Posterior vena cava (tissue), 2 donors: ENCODE measurements at regions of chr14 and their contacts with region 1.

Region 1: DNA sequence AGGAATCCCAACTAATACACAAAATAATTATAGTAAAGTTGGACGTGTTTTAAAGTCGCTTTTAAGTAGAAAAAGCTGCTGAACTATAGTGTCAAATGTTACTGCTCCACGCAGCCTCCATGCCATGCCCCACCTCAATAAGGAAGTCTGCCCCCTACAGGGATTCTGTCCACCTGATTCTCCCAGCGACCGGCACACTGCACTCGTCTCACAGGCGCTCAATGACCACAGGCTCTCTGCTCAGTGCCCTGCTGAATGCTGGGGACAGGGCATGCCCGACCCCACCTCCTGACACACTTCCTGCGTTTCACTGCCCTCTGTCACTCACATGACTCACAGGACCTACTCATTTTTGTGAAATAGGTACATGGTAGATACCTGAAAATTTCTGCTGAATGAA is 48.9 kb downstream of the BDKRB1 start:
- DNase-seq: no peak

Region 2: DNA sequence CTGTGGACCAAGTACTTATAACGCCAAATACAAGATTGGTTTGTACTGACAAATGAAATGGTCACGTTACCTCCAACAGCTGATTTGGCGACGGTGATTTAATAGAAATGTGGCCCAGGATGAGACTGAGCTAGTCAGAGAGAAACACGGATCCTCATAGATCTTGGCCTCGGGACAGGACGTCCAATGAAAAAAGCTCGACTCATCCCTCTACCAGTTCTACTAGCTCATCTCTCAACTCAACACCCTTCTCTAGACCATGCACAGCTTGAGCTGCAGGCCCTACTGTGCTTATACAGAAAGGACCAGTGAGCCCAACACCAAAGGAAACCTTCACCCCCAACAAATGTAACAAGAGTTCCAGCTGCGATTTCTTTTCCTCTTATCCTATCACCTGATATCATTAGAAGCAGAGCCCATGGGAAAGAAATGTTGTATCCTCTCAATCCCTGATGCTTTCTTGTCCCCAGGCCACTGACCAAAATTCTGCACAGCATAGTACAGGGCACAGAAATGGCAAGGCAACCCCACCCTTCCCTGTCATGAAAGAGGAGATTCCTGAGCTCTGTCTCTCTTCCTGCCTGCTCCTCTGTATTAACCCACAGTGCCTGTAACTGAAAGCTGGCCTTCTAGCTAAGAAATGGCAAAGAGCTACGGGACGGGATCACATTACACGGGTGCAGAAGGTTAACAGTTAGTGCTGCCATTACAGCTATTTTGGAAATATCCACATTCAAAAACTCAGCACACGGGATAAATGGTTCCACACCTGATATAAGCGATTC is 1186.8 kb before region 1 on chr14:
- intact Hi-C with region 1: loop called in 1 of 2 experiments (anchors 10 kb)
- DNase-seq: no peak

Region 3: GRCh38 chr14:95814363-95815225 is 490.4 kb before region 1 on chr14:
- intact Hi-C with region 1: no loop called
- DNase-seq: no peak

Region 4: DNA sequence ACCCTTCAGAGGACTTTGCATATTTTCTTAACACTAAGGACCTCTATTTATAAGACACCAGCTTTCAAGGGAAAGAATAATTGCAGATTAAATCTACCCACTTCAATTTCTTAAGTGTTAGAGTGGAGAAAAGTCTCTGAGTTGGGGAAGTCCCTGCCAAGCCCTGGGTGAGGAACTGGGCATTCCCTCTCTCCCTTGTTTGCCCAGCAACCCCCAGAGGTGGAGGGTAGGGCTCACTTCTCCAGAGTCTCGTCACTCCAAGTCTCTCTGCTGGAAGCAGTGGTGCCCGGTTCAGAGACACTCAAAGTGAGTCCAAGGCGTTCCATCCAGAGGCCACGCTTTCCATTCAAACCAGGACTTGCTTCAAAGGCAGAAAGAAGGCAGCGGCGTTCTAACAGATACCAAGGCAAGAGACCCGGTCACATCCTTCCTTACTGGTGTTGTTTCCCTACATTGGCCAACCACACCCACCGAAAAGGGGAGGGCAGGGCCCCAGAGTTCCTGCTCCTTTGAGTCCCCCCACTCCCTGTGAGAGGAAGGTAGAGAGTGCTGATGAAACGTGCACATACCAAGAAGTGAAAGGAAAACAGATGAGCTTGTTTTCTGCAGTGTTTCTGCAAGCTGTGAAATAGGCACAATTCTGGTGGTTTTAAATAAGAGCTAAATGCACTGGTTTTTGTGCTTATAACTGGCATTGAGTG is 106.4 kb before region 1 on chr14:
- intact Hi-C with region 1: no loop called
- DNase-seq: no peak